ENCODE measurements at regions of chr5 and their contacts with region 1.

Region 1: GRCh38 chr5:146475190-146475801 is 28.2 kb downstream of the TCERG1 start:
- DNase-seq: no peak
- H3K4me3 Mint-ChIP-seq: no peak overlapping the region
- H3K27ac Mint-ChIP-seq: no peak overlapping the region
- H3K4me1 Mint-ChIP-seq: peaks cover 7% of the 10 kb centered on the region
- H3K27me3 Mint-ChIP-seq: no peaks in the 10 kb centered on the region

Region 2: GRCh38 chr5:146203011-146203871 is 272.1 kb before region 1 on chr5 and contains the start of gene RBM27:
- intact Hi-C with region 1: no loop called
- DNase-seq: peak; percentile 97
- H3K4me3 Mint-ChIP-seq: no peak within 1 kb of the TSS
- H3K27ac Mint-ChIP-seq: no peak within 1 kb of the TSS
- H3K4me1 Mint-ChIP-seq: no peaks in the 10 kb centered on the region
- H3K27me3 Mint-ChIP-seq: no peaks in the 10 kb centered on the region
- total RNA-seq, gene RBM27: 31.2 and 33.5 TPM in 2 replicates

Region 3: GRCh38 chr5:146461319-146461718 is 14.0 kb before region 1 on chr5:
- intact Hi-C with region 1: loop called (anchors 1 kb)
- DNase-seq: no peak
- H3K4me3 Mint-ChIP-seq: no peak overlapping the region
- H3K27ac Mint-ChIP-seq: no peak overlapping the region
- H3K4me1 Mint-ChIP-seq: peaks cover 25% of the 10 kb centered on the region
- H3K27me3 Mint-ChIP-seq: no peaks in the 10 kb centered on the region

Region 4: DNA sequence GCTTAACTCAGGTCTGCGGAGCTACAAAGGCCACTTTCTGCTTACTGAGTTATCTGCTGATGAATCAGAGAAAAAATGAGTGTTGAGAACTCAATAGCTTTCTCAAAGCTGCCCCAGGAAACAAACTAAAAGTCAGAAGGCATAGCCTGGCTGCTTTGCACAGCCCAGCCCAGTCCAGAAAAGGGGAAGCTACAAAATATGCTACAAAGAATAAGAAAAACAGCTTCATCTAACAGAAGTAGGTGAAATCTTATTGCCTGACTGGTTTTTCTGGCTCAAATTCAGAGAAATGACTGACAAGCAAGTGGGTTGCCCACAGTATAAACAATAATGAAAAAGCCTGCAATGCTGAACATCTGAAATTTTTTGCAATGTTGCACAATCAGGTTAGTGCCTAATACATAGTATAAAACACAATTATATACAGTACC is 247.1 kb after region 1 on chr5:
- intact Hi-C with region 1: no loop called
- DNase-seq: no peak
- H3K4me3 Mint-ChIP-seq: no peak overlapping the region
- H3K27ac Mint-ChIP-seq: no peak overlapping the region
- H3K4me1 Mint-ChIP-seq: no peaks in the 10 kb centered on the region
- H3K27me3 Mint-ChIP-seq: no peaks in the 10 kb centered on the region